AG04449 (cell line): ENCODE measurements at regions of chr3 and their contacts with region 1.

Region 1: GRCh38 chr3:155884291-155884690 is 13.8 kb downstream of the GMPS start:
- DNase-seq: no peak
- H3K4me3 ChIP-seq: no peak overlapping the region
- CTCF ChIP-seq: no peak

Region 2: GRCh38 chr3:155870133-155870944 is 14.0 kb before region 1 on chr3 and contains the start of gene GMPS:
- CTCF ChIA-PET with region 1: interaction called, 11 read pairs
- POLR2A ChIA-PET with region 1: interaction called, 3 read pairs
- DNase-seq: peak; percentile 24
- H3K4me3 ChIP-seq: peak within 1 kb of the TSS; percentile 66
- CTCF ChIP-seq: peak; percentile 66

Region 3: GRCh38 chr3:155917781-155918180 is 33.5 kb after region 1 on chr3:
- CTCF ChIA-PET with region 1: no interaction called
- POLR2A ChIA-PET with region 1: no interaction called
- DNase-seq: no peak
- H3K4me3 ChIP-seq: no peak overlapping the region
- CTCF ChIP-seq: no peak